MCF 10A (cell line): ENCODE measurements at regions of chr9 and their contacts with region 1.

Region 1: DNA sequence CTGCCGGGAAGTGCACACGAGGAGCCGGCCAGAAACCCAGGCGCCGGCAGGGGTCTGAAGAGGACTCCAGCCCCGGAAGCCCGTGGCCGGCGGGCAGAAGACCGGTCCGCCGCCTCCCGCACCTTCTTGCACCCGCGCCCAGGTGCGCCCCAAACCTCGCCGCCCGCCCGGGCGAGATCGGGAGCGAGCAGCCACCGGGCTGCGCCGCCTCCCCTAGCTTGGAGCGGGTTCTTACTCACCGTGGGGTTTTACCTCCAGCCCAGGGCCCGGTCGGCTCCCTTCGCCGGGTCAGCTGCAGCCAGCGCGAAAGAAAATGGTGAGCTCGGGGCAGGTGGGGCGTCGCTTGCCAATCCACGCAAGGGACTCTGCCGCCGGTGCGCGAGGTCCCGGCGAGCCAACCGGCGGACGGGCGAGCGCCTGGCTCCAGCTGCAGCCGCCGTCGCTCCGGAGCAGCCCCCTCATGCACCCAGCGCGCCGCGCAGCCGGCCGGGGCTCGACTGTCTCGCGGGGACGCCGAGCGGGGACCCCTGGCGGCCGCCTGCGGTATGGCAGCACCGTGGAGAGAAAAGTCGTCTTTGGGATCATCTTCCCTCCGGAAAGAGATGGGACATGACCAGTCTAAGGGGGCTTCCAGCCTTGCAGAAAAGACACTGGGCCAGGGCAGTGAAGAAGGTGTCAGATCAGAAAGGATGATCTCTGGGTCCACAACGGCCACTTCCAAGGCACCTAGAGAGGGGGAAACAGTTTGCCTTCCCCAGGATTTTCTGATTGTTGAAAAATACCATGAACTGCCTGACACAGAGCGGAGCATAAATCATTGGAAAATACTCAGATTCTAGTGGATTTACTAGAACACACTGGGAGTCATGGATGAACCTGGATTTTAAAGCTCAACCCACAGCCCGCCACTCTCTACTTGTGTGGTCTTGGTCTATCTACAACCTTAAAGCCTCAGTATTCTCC is at the start of gene MOB3B:
- DNase-seq: peak; percentile 71
- H3K4me3 Mint-ChIP-seq: peak within 1 kb of the TSS; percentile 94
- H3K27ac Mint-ChIP-seq: peak within 1 kb of the TSS; percentile 87
- H3K4me1 Mint-ChIP-seq: peaks cover 18% of the 10 kb centered on the region
- H3K27me3 Mint-ChIP-seq: no peaks in the 10 kb centered on the region
- CTCF ChIP-seq: peak; percentile 89
- total RNA-seq, gene MOB3B: 2.2 and 3.7 TPM in 2 replicates

Region 2: DNA sequence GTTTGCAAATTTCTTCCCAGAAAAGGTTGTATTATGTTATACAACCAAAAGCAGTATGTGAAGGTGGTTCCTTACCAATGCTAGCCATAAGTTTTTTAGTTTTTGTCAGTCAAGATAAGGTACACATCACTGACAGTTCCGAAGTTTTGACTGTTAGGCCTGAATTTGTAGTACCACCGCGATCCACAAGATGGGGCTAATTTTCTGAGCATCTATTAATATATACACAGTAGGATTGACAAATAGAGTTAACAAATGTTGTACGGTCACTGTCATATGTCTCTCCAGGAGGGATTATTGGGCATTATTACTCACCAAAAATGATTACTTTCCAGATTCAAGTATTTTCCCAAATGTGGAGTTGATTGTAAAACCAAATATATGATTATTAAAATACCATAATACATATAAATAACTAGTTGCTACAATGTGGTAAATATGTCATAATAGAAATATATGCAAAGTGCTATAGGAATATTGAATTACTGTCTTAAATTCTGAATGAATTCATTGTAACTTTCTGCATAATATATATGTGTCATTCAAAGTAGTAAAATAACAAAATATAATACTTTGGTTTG is 495.7 kb before region 1 on chr9:
- CTCF ChIA-PET with region 1: no interaction called
- POLR2A ChIA-PET with region 1: no interaction called
- intact Hi-C with region 1: loop called (anchors 10 kb)
- DNase-seq: peak; percentile 71
- H3K4me3 Mint-ChIP-seq: no peak overlapping the region
- H3K27ac Mint-ChIP-seq: no peak overlapping the region
- H3K4me1 Mint-ChIP-seq: peaks cover 6% of the 10 kb centered on the region
- H3K27me3 Mint-ChIP-seq: no peaks in the 10 kb centered on the region
- CTCF ChIP-seq: peak; percentile 64

Region 3: DNA sequence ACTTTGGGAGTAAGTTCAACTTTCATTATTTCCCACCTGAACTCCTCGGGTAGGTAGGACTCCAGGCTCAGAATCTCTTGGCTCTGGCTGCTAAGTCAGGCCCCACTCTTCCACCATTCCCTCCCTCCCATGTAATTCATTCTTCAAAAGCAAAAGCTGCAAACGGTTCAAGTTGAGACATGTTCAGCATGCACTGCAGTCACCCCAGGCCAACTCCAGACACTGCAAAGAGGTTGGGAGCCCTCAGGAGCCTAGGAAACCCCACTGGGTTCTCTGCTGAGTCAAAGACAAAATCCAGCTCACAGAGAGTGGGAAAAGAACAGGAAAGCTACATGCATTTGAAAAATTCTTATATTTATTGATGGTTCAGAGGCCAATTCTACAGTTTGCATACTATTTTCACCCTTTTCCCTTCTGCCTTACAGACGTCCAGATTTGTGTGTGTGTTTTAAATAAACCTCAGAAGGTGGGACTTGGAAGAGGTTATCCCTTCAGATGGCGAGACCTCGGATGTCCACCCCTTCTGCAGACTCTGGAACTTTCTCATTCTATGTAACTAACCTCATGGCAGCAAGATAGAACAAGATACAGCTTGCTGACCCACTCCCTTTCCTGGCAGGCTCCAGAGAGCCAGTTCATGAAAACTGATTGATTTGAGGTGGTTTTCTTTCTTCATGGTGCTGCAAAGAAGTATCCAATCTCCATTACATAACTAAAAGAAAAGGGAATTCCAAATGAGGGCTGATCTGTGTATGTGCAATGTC is 167.0 kb before region 1 on chr9:
- CTCF ChIA-PET with region 1: interaction called, 9 read pairs
- POLR2A ChIA-PET with region 1: interaction called, 15 read pairs
- intact Hi-C with region 1: no loop called
- DNase-seq: peak; percentile 74
- H3K4me3 Mint-ChIP-seq: no peak overlapping the region
- H3K27ac Mint-ChIP-seq: peak overlapping the region; percentile 55
- H3K4me1 Mint-ChIP-seq: peaks cover 9% of the 10 kb centered on the region
- H3K27me3 Mint-ChIP-seq: no peaks in the 10 kb centered on the region
- CTCF ChIP-seq: no peak

Region 4: GRCh38 chr9:27436234-27436633 is 93.4 kb before region 1 on chr9:
- CTCF ChIA-PET with region 1: interaction called, 4 read pairs
- POLR2A ChIA-PET with region 1: interaction called, 12 read pairs
- intact Hi-C with region 1: no loop called
- DNase-seq: no peak
- H3K4me3 Mint-ChIP-seq: no peak overlapping the region
- H3K27ac Mint-ChIP-seq: peak overlapping the region; percentile 62
- H3K4me1 Mint-ChIP-seq: peaks cover 27% of the 10 kb centered on the region
- H3K27me3 Mint-ChIP-seq: no peaks in the 10 kb centered on the region
- CTCF ChIP-seq: no peak

Region 5: DNA sequence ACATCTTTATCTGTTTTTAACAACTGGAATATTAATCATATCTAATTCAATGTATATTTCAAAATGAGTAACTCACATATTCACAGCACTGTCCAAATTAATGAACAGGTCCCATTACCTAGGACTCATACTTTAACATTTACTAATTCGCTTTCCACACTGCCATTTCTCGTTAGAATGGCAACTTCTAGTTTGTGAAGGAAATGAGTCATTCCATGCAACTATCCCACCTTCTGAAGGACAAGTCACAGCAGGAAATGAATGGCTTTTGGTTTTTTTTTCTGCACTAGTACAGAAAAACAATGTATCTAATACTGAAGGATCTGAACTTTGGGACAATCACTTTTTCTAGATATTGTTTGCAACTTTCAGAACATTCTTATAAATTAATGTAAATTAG is 30.1 kb before region 1 on chr9:
- CTCF ChIA-PET with region 1: interaction called, 4 read pairs
- POLR2A ChIA-PET with region 1: interaction called, 16 read pairs
- intact Hi-C with region 1: loop called (anchors 2 kb)
- DNase-seq: peak; percentile 79
- H3K4me3 Mint-ChIP-seq: no peak overlapping the region
- H3K27ac Mint-ChIP-seq: peak overlapping the region; percentile 70
- H3K4me1 Mint-ChIP-seq: peaks cover 23% of the 10 kb centered on the region
- H3K27me3 Mint-ChIP-seq: no peaks in the 10 kb centered on the region
- CTCF ChIP-seq: no peak

Region 6: DNA sequence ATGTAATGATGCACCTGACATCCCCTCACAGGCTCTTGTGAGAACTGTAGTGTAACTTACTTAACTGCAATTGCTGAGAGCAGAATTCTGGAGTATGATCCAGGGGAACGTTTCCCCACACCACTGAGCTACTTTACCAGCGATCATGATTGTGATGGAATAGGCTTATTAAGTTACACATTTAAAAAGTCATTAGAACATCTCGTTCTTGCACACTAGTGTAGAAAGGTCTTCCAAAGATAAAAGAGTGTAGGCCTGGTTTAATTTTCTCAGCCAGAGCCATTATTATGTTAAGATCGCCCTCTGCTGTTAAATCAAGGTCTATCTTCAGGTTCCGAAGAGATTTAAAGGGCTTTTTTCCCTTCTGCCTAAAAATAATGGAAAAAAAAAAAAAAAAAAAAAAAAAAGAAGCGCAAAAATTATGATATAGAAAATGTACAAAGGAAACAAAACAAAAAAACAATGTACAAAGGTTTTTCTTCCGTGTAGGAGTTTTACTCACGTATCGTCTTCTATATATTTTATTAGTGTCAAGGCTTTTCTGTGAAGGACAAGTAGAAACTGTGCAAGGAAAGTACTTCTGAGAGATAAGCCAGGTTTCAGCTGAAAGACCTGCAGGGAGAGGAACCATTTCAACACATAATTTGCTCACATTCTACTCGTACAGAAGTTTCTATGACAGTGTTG is 18.6 kb after region 1 on chr9:
- CTCF ChIA-PET with region 1: interaction called, 20 read pairs
- POLR2A ChIA-PET with region 1: interaction called, 6 read pairs
- intact Hi-C with region 1: loop called (anchors 1 kb)
- DNase-seq: peak; percentile 59
- H3K4me3 Mint-ChIP-seq: no peak overlapping the region
- H3K27ac Mint-ChIP-seq: peak overlapping the region; percentile 54
- H3K4me1 Mint-ChIP-seq: no peaks in the 10 kb centered on the region
- H3K27me3 Mint-ChIP-seq: no peaks in the 10 kb centered on the region
- CTCF ChIP-seq: peak; percentile 48

Region 7: DNA sequence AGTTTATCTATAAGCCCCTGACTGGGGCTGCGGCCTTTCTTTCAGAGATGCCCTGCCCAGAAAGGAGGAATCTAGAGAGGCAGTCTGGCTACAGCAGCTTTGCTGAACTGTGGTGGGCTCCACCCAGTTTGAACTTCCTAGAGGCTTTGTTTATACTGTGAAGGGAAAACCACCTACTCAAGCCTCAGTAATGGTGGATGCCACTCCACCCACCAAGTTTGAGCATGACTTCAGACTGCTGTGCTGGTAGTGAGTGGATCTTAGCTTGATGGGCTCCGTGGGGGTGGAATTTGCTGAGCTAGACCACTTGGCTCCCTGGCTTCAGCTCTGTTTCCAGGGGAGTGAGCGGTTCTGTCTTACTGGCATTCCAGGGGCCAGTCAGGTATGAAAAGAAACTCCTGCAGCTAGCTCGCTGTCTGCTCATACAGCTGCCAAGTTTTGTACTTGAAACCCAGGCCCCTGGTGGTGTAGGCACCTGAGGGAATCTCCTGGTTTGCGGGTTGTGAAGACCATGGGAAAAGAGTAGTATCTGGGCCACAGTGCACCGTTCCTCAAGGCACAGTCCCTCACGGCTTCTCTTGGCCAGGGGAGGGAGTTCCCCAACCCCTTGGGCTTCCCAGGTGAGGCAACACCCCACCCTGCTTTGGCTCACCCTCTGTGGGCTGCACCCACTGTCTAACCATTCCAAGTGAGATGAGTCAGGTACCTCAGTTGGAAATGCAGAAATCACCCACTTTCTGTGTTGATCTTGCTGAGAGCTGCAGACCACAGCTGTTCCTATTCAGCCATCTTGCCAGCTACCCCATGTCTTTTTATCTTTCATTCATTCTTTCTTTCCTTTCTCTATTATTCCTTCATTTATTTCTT is 255.5 kb after region 1 on chr9:
- CTCF ChIA-PET with region 1: no interaction called
- POLR2A ChIA-PET with region 1: no interaction called
- intact Hi-C with region 1: no loop called
- DNase-seq: peak; percentile 74
- H3K4me3 Mint-ChIP-seq: no peak overlapping the region
- H3K27ac Mint-ChIP-seq: no peak overlapping the region
- H3K4me1 Mint-ChIP-seq: peaks cover 6% of the 10 kb centered on the region
- H3K27me3 Mint-ChIP-seq: no peaks in the 10 kb centered on the region
- CTCF ChIP-seq: no peak